ENCODE measurements at regions of chr4 and their contacts with region 1.

Region 1: DNA sequence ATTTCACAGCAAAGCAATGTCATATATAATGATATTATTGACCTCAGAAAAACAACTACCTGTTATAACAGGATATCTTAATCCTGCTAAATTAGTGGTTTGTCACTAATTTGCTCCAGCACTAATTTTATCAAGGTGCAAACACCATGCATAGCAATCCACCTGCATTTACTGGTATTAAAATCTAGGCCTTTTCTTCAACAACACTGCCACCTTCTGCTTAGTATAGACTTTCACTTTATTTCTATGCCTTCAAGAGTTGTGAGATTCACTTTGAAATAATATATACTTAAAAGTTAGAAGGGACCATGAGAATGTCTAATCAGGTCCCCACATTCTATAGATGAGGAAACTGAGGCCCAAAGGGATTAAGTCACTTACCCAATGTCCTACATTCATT is 82.1 kb upstream of the IQCM start:
- DNase-seq: no peak
- ATAC-seq: no peak
- H3K4me3 Mint-ChIP-seq: no peak overlapping the region
- H3K27ac Mint-ChIP-seq: no peak overlapping the region
- H3K4me1 Mint-ChIP-seq: no peaks in the 10 kb centered on the region
- H3K27me3 Mint-ChIP-seq: no peaks in the 10 kb centered on the region
- CTCF ChIP-seq: peak; percentile 29

Region 2: GRCh38 chr4:149370785-149371420 is 526.9 kb before region 1 on chr4:
- CTCF ChIA-PET with region 1: no interaction called
- POLR2A ChIA-PET with region 1: no interaction called
- intact Hi-C with region 1: loop called (anchors 10 kb)
- DNase-seq: no peak
- ATAC-seq: no peak
- H3K4me3 Mint-ChIP-seq: no peak overlapping the region
- H3K27ac Mint-ChIP-seq: no peak overlapping the region
- H3K4me1 Mint-ChIP-seq: no peaks in the 10 kb centered on the region
- H3K27me3 Mint-ChIP-seq: no peaks in the 10 kb centered on the region
- CTCF ChIP-seq: no peak